Mammary epithelial cell (primary cell): ENCODE measurements at regions of chr14 and their contacts with region 1.

Region 1: DNA sequence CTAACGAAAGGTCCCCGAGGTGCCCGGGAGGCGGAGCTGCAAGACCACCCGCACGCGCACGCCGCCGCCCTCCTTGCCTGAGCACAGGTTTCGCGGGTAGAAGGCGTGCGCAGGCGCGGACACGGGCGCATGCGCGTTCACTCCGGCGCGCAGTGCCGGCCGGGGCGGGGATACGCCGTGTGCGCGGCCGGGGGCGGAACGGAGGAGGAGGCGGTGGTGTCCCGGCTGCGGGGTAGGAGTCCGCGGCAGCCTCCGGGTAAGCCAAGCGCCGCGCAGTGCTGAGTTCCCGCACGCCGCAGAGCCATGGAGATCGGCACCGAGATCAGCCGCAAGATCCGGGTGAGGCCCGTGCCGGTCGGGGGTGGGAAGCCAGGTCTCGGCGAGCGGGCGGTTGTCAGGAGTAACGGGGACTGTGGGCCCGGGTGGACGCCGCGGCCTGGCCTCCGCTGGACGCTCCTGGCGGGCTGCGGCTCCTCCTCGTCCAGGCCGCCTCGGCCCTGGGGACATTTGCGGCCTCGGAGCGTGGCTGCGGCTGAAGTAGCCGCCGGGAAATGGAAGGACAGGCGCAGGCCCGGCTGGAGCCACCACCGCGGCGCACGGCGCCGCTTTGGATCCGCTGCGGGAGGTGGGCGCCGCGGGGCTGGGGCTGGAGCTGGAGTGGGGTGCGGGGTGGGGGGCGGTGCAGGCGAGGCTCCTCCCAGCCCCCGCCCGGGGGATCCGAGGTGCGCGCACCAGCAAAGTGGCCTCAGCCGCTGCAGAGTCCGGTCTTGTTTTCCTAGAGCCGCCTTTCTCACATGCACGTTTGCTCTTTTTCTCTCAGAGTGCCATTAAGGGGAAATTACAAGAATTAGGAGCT is at the start of gene ZC3H14:
- DNase-seq: peak; percentile 89
- H3K4me3 ChIP-seq: peak within 1 kb of the TSS; percentile 80 to 99 (median 98)
- H3K27ac ChIP-seq: peak within 1 kb of the TSS; percentile 48
- H3K4me1 ChIP-seq: peaks cover 9% of the 10 kb centered on the region
- H3K27me3 ChIP-seq: no peaks in the 10 kb centered on the region
- CTCF ChIP-seq: no peak
- total RNA-seq, gene ZC3H14: 60.7 to 70.3 TPM

Region 2: GRCh38 chr14:88452231-88452630 is 110.8 kb before region 1 on chr14:
- CTCF ChIA-PET with region 1: no interaction called
- dilution Hi-C with region 1: no loop called
- in situ Hi-C with region 1: no loop called
- intact Hi-C with region 1: no loop called
- DNase-seq: no peak
- H3K4me3 ChIP-seq: no peak overlapping the region
- H3K27ac ChIP-seq: no peak overlapping the region
- H3K4me1 ChIP-seq: no peaks in the 10 kb centered on the region
- H3K27me3 ChIP-seq: no peaks in the 10 kb centered on the region
- CTCF ChIP-seq: no peak

Region 3: DNA sequence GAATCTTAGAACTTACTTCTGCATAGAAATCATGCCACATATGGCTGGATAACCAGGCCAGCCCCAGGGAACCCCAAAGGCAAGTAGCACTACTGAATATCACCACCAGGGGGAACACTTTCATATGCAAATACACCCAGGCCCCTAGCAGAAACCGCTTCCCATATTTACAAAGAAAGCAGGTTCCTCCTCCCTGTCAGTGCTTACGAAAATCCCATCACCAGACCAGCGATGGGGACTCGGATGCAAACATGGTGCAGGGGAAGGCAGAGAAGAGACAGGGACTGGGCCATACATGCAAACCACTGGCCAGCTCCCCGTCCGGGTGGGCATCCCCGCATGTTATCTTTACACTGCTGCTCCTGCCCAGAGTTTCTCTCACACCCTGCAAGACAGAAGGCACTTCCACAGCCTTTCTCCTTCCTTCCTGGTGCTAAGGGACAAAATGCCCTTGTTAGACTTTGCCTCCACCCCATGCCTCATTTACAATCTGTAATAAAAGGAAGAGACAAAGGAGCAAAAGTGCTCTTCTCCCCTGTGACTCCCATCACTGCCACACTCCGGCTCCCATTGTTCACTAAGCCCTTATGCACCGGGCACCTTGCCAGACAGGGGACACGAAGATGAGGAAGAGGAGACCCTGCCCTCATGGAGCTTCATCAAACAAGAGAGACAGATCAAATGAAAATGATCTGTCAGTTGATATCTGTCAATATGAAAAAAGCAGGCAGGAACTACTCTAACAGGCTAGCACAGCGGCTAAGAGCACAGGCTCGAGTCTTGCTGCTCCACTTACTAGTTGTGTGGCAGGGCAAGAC is 70.6 kb before region 1 on chr14:
- CTCF ChIA-PET with region 1: interaction called, 5 read pairs
- dilution Hi-C with region 1: no loop called
- in situ Hi-C with region 1: no loop called
- intact Hi-C with region 1: loop called (anchors 1 kb)
- DNase-seq: peak; percentile 49
- H3K4me3 ChIP-seq: no peak overlapping the region
- H3K27ac ChIP-seq: no peak overlapping the region
- H3K4me1 ChIP-seq: peaks cover 13% of the 10 kb centered on the region
- H3K27me3 ChIP-seq: no peaks in the 10 kb centered on the region
- CTCF ChIP-seq: peak; percentile 84 to 88

Region 4: GRCh38 chr14:88535149-88535548 is 27.9 kb before region 1 on chr14:
- CTCF ChIA-PET with region 1: no interaction called
- dilution Hi-C with region 1: no loop called
- in situ Hi-C with region 1: no loop called
- intact Hi-C with region 1: no loop called
- DNase-seq: no peak
- H3K4me3 ChIP-seq: no peak overlapping the region
- H3K27ac ChIP-seq: no peak overlapping the region
- H3K4me1 ChIP-seq: no peaks in the 10 kb centered on the region
- H3K27me3 ChIP-seq: no peaks in the 10 kb centered on the region
- CTCF ChIP-seq: no peak

Region 5: GRCh38 chr14:88667555-88668273 is 104.7 kb after region 1 on chr14:
- CTCF ChIA-PET with region 1: no interaction called
- dilution Hi-C with region 1: no loop called
- in situ Hi-C with region 1: no loop called
- intact Hi-C with region 1: no loop called
- DNase-seq: peak; percentile 70
- H3K4me3 ChIP-seq: no peak overlapping the region
- H3K27ac ChIP-seq: no peak overlapping the region
- H3K4me1 ChIP-seq: peaks cover 6% of the 10 kb centered on the region
- H3K27me3 ChIP-seq: no peaks in the 10 kb centered on the region
- CTCF ChIP-seq: peak; percentile 87 to 94